Aorta (tissue), 5 donors: ENCODE measurements at regions of chr11 and their contacts with region 1.

Region 1: DNA sequence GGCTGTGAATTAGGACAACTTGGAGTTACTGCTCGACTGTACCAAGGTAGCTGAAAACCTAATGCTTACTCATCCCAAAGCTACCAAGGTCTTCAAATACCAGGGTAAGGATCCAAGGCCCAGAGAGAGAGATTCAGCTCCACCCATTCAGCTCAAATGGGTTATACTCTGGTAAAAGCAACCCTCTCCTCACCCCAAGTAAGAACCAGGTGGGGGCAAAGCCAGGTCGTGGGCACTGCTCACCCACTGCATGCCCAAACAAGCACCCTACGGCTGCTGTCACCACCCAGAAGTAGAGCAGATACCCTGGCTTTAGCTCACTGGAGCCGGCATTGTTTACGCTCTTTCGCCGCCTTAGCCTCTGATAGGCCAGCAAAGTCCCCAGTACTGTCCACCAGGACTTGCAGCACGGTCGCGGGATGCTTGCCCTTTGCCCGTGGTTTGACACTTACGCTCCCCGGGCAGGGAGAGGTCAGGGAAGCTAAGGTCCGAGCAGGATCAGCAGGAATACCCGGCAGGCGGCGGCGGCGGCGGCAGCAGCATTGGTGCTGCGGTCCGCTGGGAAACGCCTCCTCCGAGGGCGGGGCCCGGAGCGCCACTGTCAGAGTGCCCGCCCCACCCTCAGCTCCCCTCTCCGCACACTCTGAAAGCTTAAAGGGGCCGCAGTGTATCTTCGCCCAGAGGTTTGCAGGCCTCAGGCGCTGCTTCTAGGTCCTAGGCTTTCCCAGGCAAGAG is 19.6 kb downstream of the CKAP5 start:
- DNase-seq: peak; percentile 90 to 94
- ATAC-seq: peak; percentile 99
- H3K4me3 ChIP-seq: peak overlapping the region; percentile 54 to 62
- H3K27ac ChIP-seq: peak overlapping the region in 1 of 2 donors; percentile 71
- H3K4me1 ChIP-seq: peaks cover 2 to 4% of the 10 kb centered on the region in 2 donors
- H3K27me3 ChIP-seq: no peaks in the 10 kb centered on the region

Region 2: DNA sequence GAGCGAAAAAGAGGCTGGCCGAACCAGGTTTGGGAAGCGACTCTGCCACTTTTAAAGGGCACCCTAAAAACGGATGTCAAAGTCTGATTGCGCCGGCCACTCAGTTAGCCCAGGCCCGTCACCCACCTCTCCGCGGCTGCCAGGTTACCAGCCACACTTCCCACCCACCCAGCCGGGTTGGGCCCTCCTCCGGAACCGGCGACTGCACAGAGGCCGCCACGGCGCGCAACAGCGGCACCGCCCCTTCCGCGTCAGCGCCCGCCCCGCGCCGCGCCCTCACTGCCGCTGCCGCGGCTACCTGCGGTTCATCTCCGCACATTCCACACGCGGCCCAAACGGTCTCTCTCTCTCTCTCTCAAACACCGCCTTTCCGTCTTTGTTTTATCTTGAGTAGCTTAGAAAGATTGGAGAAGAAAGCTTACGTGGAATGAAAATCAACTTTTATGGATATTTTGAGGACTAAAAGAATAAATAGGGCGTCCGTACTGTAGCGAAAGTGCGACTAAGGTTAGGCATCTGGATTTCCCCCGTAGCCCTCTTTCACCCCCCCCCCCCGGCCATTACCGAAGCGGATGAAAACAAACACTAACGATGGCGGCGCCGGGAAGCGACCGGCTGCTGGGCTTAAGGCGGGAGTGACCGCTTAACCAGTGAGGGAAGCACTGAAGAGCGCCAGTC is 209.3 kb before region 1 on chr11 and contains the starts of genes ATG13 and HARBI1:
- intact Hi-C with region 1: no loop called
- DNase-seq: peak; percentile 92 to 96
- ATAC-seq: peak; percentile 99
- H3K4me3 ChIP-seq: peak within 1 kb of the TSS; percentile 95 to 100
- H3K27ac ChIP-seq: peak within 1 kb of the TSS; percentile 80 to 96
- H3K4me1 ChIP-seq: peaks cover 0 to 2% of the 10 kb centered on the region in 2 donors
- H3K27me3 ChIP-seq: no peaks in the 10 kb centered on the region
- total RNA-seq, gene ATG13: 59.6 to 72.7 TPM
- total RNA-seq, gene HARBI1: 2.3 to 3.0 TPM

Region 3: GRCh38 chr11:46845740-46846509 is 19.4 kb after region 1 on chr11 and contains the start of gene CKAP5:
- intact Hi-C with region 1: loop called in 1 of 2 experiments (anchors 1 kb)
- DNase-seq: peak; percentile 95 to 96
- ATAC-seq: peak; percentile 99
- H3K4me3 ChIP-seq: peak within 1 kb of the TSS; percentile 84 to 97
- H3K27ac ChIP-seq: peak within 1 kb of the TSS in 1 of 2 donors; percentile 28
- H3K4me1 ChIP-seq: no peaks in the 10 kb centered on the region
- H3K27me3 ChIP-seq: no peaks in the 10 kb centered on the region
- total RNA-seq, gene CKAP5: 59.6 to 64.5 TPM

Region 4: GRCh38 chr11:47004595-47005033 is 178.1 kb after region 1 on chr11:
- intact Hi-C with region 1: no loop called
- DNase-seq: peak in 1 of 2 donors; percentile 81
- ATAC-seq: peak; percentile 93
- H3K4me3 ChIP-seq: no peak overlapping the region
- H3K27ac ChIP-seq: no peak overlapping the region
- H3K4me1 ChIP-seq: peaks cover 0 to 4% of the 10 kb centered on the region in 2 donors
- H3K27me3 ChIP-seq: no peaks in the 10 kb centered on the region

Region 5: DNA sequence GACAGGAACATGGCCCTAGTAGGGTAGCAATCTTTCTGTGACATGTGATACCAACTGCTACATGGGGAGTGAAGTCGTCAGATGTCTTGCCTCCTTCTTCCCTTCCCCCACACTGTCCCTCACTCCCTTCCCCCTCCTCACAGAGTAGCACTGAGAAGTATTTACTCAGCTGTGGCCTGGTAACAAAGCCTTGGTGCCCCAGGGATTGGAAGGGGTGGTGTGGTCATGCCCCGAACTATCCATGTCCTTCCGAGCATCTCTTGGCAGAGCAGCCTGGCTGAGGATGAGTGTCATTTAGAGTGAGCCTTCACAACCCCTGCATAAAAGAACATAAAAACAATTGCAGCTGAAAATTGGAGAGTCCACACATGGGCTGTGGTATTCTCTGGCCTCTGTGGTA is 304.1 kb after region 1 on chr11:
- intact Hi-C with region 1: no loop called
- DNase-seq: no peak
- ATAC-seq: no peak
- H3K4me3 ChIP-seq: no peak overlapping the region
- H3K27ac ChIP-seq: no peak overlapping the region
- H3K4me1 ChIP-seq: no peaks in the 10 kb centered on the region
- H3K27me3 ChIP-seq: no peaks in the 10 kb centered on the region